ENCODE measurements at regions of chr22 and their contacts with region 1.

Region 1: GRCh38 chr22:25057013-25057881 is 104.7 kb downstream of the KIAA1671 start:
- DNase-seq: peak; percentile 59 to 87 (median 72)
- ATAC-seq: peak; percentile 55
- H3K4me3 ChIP-seq: no peak overlapping the region
- H3K4me3 Mint-ChIP-seq: no peak overlapping the region
- H3K27ac ChIP-seq: no peak overlapping the region
- H3K27ac Mint-ChIP-seq: no peak overlapping the region
- H3K4me1 ChIP-seq: peaks cover 27% of the 10 kb centered on the region
- H3K4me1 Mint-ChIP-seq: peaks cover 33% of the 10 kb centered on the region
- H3K27me3 ChIP-seq: no peaks in the 10 kb centered on the region
- H3K27me3 Mint-ChIP-seq: no peaks in the 10 kb centered on the region
- CTCF ChIP-seq: peak; percentile 80

Region 2: DNA sequence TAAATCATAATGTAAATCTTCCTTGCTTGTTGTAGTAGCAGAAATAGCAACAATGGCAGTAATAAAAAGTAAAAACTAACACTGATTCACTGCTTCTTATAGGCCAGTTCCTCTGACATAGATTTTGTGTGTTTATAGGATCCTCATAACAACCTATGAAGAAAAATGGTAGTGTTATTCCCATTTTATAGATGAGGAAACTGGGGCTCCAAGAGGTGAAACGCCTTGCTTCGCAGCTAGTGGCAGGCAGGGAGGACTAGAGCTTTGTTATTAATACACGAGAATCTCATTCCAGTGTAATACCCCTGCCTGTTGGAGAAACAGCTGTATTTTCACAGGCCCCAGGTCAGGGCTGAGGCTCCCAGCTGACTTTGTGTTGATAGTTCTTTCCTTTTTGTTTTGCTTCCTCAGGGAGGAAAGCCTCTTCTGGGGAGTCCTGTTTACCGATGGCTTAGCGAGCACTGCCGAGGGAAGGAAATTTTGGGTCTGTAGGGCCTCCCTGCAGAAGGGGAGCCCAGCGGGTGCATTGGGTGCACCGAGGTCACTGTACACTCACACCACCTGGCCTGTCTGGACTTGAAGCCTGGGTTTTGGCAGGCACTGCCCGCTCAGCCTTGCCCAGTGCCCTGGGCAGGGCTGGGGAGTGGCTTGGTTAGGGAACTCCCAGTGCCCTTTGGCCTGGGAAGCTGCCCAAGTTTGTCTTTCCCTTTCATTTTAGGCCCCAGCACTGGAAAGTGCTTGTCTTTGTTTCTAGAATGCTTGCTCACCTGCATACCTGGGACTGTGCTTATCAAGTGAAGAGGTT is 91.2 kb before region 1 on chr22:
- CTCF ChIA-PET with region 1: no interaction called
- POLR2A ChIA-PET with region 1: no interaction called
- intact Hi-C with region 1: no loop called
- DNase-seq: no peak
- ATAC-seq: no peak
- H3K4me3 ChIP-seq: no peak overlapping the region
- H3K4me3 Mint-ChIP-seq: no peak overlapping the region
- H3K27ac ChIP-seq: no peak overlapping the region
- H3K27ac Mint-ChIP-seq: no peak overlapping the region
- H3K4me1 ChIP-seq: no peaks in the 10 kb centered on the region
- H3K4me1 Mint-ChIP-seq: no peaks in the 10 kb centered on the region
- H3K27me3 ChIP-seq: no peaks in the 10 kb centered on the region
- H3K27me3 Mint-ChIP-seq: no peaks in the 10 kb centered on the region
- CTCF ChIP-seq: no peak

Region 3: DNA sequence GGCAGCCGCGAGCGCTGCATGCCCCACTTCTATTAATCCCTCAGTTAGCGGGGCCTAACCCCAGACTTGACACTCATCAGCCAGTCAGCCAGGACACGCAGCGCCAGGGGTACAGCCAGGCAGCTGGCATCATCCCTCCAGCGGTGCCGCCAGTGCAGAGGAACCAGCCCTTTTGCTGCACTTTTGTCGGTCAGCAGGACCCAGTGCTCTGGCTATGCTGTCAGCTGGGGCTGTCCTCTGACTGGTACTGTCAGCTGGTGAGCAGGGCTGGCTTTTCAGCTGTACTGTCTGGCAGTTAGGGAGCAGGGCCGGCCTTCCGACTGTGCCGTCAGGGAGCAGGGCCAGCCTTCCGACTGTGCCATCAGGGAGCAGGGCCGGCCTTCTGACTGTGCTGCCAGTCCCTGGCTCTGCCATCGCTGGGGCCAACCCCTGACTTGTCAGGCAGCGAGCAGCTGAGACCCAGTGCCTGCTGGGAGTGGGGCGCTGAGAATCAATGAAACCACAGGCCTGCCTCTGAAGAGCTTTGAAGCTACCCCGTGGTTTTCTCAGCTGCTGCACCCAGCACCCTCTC is 10.7 kb after region 1 on chr22:
- CTCF ChIA-PET with region 1: interaction called, 14 read pairs
- POLR2A ChIA-PET with region 1: interaction called, 27 read pairs
- intact Hi-C with region 1: loop called in 1 of 2 experiments (anchors 1 kb)
- DNase-seq: peak; percentile 75 to 97 (median 86)
- ATAC-seq: peak; percentile 83
- H3K4me3 ChIP-seq: peak overlapping the region; percentile 29
- H3K4me3 Mint-ChIP-seq: peak overlapping the region; percentile 73
- H3K27ac ChIP-seq: peak overlapping the region; percentile 83 to 90
- H3K27ac Mint-ChIP-seq: peak overlapping the region; percentile 96
- H3K4me1 ChIP-seq: peaks cover 93% of the 10 kb centered on the region
- H3K4me1 Mint-ChIP-seq: peaks cover 81% of the 10 kb centered on the region
- H3K27me3 ChIP-seq: no peaks in the 10 kb centered on the region
- H3K27me3 Mint-ChIP-seq: no peaks in the 10 kb centered on the region
- CTCF ChIP-seq: no peak

Region 4: DNA sequence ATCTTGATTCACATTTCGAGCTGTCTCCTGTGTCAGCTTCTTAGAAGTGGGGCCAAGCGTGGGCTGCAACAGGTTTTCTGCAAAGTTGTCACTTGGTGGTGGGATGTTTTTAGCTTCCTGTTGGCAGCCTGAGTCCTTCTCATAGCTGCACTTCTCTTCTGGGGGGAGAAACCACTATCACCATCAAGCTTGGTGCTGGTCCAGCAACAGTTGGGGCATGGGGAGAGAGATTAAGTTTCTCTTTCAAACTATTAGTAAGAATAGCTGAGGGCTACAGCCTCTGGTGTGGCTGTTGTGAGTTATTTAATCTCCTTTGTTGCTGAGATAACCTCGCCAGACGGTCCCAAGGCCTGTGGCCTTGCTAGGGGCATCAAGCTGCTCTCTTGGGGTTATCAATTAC is 19.1 kb after region 1 on chr22:
- CTCF ChIA-PET with region 1: interaction called, 17 read pairs
- POLR2A ChIA-PET with region 1: interaction called, 43 read pairs
- intact Hi-C with region 1: loop called (anchors 1 kb)
- DNase-seq: peak in 3 of 14 experiments; percentile 30 to 59 (median 37)
- ATAC-seq: peak; percentile 30
- H3K4me3 ChIP-seq: no peak overlapping the region
- H3K4me3 Mint-ChIP-seq: peak overlapping the region; percentile 77
- H3K27ac ChIP-seq: peak overlapping the region in 1 of 2 donors; percentile 40
- H3K27ac Mint-ChIP-seq: peak overlapping the region; percentile 87
- H3K4me1 ChIP-seq: peaks cover 44% of the 10 kb centered on the region
- H3K4me1 Mint-ChIP-seq: peaks cover 85% of the 10 kb centered on the region
- H3K27me3 ChIP-seq: no peaks in the 10 kb centered on the region
- H3K27me3 Mint-ChIP-seq: no peaks in the 10 kb centered on the region
- CTCF ChIP-seq: no peak

Region 5: GRCh38 chr22:25179250-25179631 is 122.0 kb after region 1 on chr22:
- CTCF ChIA-PET with region 1: no interaction called
- POLR2A ChIA-PET with region 1: no interaction called
- intact Hi-C with region 1: no loop called
- DNase-seq: no peak
- ATAC-seq: peak; percentile 58
- H3K4me3 ChIP-seq: no peak overlapping the region
- H3K4me3 Mint-ChIP-seq: no peak overlapping the region
- H3K27ac ChIP-seq: no peak overlapping the region
- H3K27ac Mint-ChIP-seq: no peak overlapping the region
- H3K4me1 ChIP-seq: no peaks in the 10 kb centered on the region
- H3K4me1 Mint-ChIP-seq: no peaks in the 10 kb centered on the region
- H3K27me3 ChIP-seq: no peaks in the 10 kb centered on the region
- H3K27me3 Mint-ChIP-seq: no peaks in the 10 kb centered on the region
- CTCF ChIP-seq: no peak

Measured in CD4-positive, alpha-beta T cell (primary cell).